AG04449 (cell line): ENCODE measurements at regions of chr15 and their contacts with region 1.

Region 1: GRCh38 chr15:64067564-64068030 is 21.3 kb upstream of the DAPK2 start:
- DNase-seq: no peak
- H3K4me3 ChIP-seq: no peak overlapping the region
- CTCF ChIP-seq: peak; percentile 66

Region 2: GRCh38 chr15:63600616-63601025 is 467.0 kb before region 1 on chr15:
- CTCF ChIA-PET with region 1: interaction called, 14 read pairs
- POLR2A ChIA-PET with region 1: no interaction called
- DNase-seq: peak; percentile 23
- H3K4me3 ChIP-seq: peak overlapping the region; percentile 76
- CTCF ChIP-seq: no peak

Region 3: DNA sequence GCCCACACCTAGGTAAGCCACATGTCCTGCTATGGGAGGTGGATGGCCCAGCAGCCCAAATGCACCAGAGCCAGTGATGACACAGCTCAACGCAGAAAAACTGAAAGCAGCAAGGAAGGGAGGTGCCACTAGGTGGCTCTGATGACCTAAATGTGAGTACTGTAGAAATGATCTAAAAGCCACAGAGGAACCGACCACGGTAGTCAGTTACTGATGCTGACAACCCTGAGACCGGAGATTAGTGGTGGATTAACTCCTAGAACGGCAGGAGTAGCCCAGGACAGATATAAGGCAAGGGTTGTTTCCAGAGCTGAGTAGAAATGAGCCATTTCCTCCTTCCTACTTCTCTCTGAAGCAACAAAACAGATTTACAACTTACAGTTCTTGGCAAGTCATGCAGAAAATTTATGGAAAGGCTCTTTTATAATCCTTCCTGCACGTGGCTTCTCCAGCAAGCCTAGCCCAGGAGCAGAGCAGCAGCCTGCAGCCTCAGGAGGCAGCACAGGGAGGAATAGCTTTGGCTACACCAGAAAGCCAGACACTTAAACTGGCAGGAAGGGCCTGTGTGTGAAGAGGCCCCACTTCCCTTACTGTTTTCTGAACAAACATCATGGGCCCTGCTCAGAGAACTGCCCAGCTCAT is 457.3 kb before region 1 on chr15:
- CTCF ChIA-PET with region 1: interaction called, 30 read pairs
- POLR2A ChIA-PET with region 1: no interaction called
- DNase-seq: no peak
- H3K4me3 ChIP-seq: no peak overlapping the region
- CTCF ChIP-seq: peak; percentile 82

Region 4: GRCh38 chr15:63638839-63639238 is 428.8 kb before region 1 on chr15:
- CTCF ChIA-PET with region 1: interaction called, 10 read pairs
- POLR2A ChIA-PET with region 1: no interaction called
- DNase-seq: no peak
- H3K4me3 ChIP-seq: no peak overlapping the region
- CTCF ChIP-seq: no peak

Region 5: DNA sequence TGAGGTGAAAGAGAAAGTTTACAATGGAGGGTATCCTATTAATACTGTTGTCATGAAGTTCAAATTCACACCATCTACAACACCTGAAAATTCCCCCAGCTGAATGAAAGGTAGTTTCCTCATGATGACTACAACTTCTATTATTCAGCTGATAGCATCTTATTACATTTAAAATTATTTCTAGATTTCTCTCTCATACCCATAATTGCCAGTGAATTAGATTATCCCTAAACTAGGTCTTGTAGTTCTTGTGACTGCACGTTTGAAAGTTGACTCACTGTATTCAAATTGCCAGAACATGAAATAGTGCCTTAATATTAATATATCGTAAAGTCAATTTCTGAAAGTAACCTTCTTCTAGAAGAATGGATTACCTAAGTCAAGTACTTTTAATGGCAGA is 388.0 kb before region 1 on chr15:
- CTCF ChIA-PET with region 1: interaction called, 10 read pairs
- POLR2A ChIA-PET with region 1: no interaction called
- DNase-seq: no peak
- H3K4me3 ChIP-seq: no peak overlapping the region
- CTCF ChIP-seq: no peak

Region 6: GRCh38 chr15:63891079-63891767 is 176.4 kb before region 1 on chr15:
- CTCF ChIA-PET with region 1: interaction called, 30 read pairs
- POLR2A ChIA-PET with region 1: no interaction called
- DNase-seq: no peak
- H3K4me3 ChIP-seq: no peak overlapping the region
- CTCF ChIP-seq: peak; percentile 91

Region 7: DNA sequence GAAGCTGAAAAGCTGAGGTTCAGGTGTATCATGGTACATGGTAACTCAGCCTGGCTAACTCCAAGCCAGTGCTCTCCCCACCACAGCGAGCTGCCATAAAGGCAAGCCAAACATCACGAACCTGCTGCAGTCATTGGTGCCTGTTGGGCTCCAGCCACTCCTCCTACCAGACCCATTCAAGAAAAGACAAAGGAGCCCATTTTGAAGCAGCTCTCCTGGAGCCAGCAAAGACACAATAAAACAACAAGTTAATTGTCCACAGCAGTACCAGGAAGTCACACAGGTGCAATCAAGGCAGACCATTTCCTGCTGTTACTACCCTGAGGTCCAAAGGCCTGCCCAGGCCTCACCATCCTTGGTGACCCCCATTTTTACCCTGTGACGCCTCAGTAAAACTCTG is 98.9 kb before region 1 on chr15:
- CTCF ChIA-PET with region 1: no interaction called
- POLR2A ChIA-PET with region 1: no interaction called
- DNase-seq: no peak
- H3K4me3 ChIP-seq: no peak overlapping the region
- CTCF ChIP-seq: no peak

Region 8: GRCh38 chr15:64046347-64047153 is 21.0 kb before region 1 on chr15 and contains the start of gene DAPK2:
- CTCF ChIA-PET with region 1: interaction called, 129 read pairs
- POLR2A ChIA-PET with region 1: no interaction called
- DNase-seq: no peak
- H3K4me3 ChIP-seq: peak within 1 kb of the TSS; percentile 60
- CTCF ChIP-seq: peak; percentile 71

Region 9: GRCh38 chr15:64112904-64113303 is 45.3 kb after region 1 on chr15:
- CTCF ChIA-PET with region 1: no interaction called
- POLR2A ChIA-PET with region 1: no interaction called
- DNase-seq: no peak
- H3K4me3 ChIP-seq: no peak overlapping the region
- CTCF ChIP-seq: no peak